Activated CD4-positive, alpha-beta memory T cell treated with anti-CD3 and anti-CD28 coated beads for 36 hours (primary cell): ENCODE measurements at regions of chr19 and their contacts with region 1.

Region 1: DNA sequence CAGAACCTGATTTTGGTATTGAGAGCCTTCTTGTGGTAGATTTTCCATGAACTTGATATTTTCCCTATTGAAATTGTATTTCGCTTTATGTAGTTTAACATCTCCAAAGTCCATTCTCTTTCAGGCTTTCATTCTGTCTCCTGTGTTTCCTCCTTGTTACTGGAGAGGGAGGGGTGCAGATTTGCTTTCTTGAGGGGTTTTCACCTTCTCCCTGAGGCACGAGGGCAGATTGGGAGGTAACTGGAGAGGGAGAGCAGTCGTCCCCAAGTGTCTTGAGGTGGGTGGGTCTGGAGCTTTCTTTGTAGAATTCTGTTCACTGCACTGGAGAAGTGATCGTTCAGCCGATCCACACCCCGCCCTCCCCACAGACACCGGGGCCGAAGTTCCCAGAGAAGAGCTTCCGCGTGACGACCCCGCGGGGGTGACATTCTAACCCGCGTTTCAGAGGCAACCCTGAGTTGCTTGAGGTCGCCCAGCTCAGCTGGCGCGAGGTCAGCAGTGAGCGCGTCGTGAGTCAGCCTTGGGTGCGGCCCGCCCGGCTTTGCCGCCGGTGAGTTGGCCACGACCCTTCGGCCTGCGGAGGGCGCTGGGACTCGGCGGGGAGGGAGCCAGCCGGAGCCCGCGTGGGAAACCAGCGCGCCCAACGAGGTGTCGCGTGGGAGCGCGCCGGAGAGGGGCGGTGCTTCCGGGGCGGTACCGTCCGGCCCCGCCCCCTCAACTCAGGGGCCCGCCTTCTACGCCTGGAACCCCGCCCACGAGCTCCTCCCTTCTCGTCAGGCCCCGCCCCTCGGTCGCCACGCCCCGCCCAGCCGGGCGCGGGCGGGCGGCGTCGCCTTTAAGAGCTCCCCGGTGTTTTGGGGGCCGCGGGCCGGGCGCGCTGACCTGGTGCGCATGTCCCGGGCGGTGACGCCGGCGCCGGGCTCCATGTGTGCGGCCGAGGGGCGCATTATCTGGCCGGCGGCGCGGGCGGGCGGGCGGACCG is at the start of gene GATAD2A:
- DNase-seq: peak; percentile 94
- H3K4me3 Mint-ChIP-seq: peak within 1 kb of the TSS; percentile 95
- H3K27ac Mint-ChIP-seq: peak within 1 kb of the TSS; percentile 93
- H3K4me1 Mint-ChIP-seq: peaks cover 62% of the 10 kb centered on the region
- H3K27me3 Mint-ChIP-seq: no peaks in the 10 kb centered on the region
- total RNA-seq, gene GATAD2A: 114 TPM

Region 2: DNA sequence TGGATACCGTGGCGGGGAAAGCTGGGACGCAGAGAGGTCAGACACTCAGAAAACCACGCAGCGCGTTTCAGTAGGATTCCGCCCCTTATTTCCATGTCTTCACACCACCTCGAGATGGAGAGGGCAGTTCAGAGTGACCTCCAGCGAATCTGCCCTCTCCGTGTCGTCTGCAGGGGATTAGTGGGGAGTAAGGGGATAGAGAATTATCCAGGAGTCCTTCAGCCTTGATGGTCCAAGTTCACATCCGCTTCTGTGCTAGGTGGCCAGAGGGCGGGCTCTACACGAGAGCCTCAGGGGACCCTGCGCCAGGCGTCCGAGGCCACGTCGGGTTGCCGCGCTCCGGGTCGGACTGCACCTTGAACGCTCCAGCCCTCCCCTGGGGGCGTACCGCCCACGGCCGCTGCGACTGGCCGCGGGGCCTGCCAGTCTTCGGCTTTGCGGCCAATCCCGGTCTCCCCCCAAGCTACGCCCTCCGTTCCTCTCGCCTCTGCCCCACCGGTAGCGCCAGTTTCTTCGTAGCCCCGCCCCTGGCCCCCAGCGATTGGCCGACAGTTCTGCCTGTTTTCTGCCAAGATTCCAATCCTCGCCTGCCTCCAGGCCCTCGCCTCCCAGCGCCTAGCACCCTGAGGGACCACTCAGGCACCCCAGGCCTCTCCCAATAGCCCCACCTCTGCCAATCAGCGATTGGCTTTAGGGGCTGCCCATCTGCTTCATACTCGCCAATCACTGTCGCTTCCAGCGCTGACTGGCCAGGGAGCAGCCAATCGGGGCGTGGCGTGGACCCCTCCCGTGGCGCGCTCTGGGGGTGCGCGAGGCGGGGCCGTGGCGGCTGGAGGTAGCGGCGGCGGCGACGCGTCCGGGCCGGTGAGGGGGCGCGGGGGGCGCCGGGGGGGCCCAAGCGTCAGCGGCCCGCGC is 341.7 kb before region 1 on chr19 and contains the start of gene SLC25A42:
- CTCF ChIA-PET with region 1: no interaction called
- POLR2A ChIA-PET with region 1: no interaction called
- intact Hi-C with region 1: loop called (anchors 2 kb)
- DNase-seq: peak; percentile 99
- H3K4me3 Mint-ChIP-seq: peak within 1 kb of the TSS; percentile 79
- H3K27ac Mint-ChIP-seq: peak within 1 kb of the TSS; percentile 72
- H3K4me1 Mint-ChIP-seq: peaks cover 31% of the 10 kb centered on the region
- H3K27me3 Mint-ChIP-seq: no peaks in the 10 kb centered on the region
- total RNA-seq, gene SLC25A42: 12.2 to 12.4 TPM

Region 3: GRCh38 chr19:19280561-19280960 is 124.6 kb before region 1 on chr19:
- CTCF ChIA-PET with region 1: no interaction called
- POLR2A ChIA-PET with region 1: no interaction called
- intact Hi-C with region 1: no loop called
- DNase-seq: no peak
- H3K4me3 Mint-ChIP-seq: no peak overlapping the region
- H3K27ac Mint-ChIP-seq: no peak overlapping the region
- H3K4me1 Mint-ChIP-seq: no peaks in the 10 kb centered on the region
- H3K27me3 Mint-ChIP-seq: no peaks in the 10 kb centered on the region

Region 4: DNA sequence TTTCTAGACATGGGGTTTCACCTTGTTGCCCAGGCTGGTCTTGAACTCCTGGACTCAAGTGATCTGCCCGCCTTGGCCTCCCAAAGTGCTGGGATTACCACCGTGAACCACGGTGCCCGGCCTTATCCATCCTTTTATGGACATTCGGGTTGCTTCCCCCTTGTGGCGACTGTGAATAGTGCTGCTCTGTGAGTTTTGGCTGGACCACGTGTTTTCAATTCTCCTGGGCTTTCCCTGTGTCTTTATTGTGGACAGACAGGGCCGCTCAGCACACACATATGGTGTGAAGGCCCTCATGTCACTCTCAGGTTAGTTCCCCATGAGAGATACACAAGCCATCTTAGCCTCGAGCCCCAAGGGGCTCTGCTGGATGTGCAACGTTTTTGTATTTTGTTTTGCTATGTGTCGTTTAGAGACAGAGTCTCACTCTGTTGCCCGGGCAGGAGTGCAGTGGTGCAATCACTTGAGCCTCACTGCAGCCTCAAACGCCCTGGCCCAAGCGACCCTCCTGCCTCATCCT is 44.0 kb before region 1 on chr19:
- CTCF ChIA-PET with region 1: interaction called, 9 read pairs
- POLR2A ChIA-PET with region 1: interaction called, 4 read pairs
- intact Hi-C with region 1: loop called (anchors 2 kb)
- DNase-seq: peak; percentile 88
- H3K4me3 Mint-ChIP-seq: no peak overlapping the region
- H3K27ac Mint-ChIP-seq: no peak overlapping the region
- H3K4me1 Mint-ChIP-seq: peaks cover 29% of the 10 kb centered on the region
- H3K27me3 Mint-ChIP-seq: no peaks in the 10 kb centered on the region

Region 5: DNA sequence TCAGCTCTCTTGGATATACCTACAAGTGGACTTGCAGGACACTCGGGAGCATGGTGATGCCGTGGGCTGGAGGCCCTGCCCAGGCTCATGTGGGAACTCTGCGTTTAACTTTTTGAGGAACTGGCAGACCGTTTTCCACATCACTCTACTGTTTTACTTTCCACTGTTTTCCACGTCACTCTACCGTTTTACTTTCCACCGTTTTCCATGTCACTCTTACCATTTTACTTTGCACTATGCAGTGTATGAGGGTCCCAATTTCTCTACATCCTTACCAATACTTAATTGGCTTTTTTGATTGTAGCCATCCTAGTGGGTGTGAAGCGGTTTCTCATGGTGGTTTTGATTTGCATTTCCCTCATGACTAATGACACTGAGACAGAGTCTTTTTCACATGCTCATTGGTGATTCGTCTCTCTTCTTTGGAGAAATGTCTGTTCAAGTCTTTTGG is 40.8 kb after region 1 on chr19:
- CTCF ChIA-PET with region 1: interaction called, 3 read pairs
- POLR2A ChIA-PET with region 1: interaction called, 4 read pairs
- intact Hi-C with region 1: loop called (anchors 2 kb)
- DNase-seq: peak; percentile 39
- H3K4me3 Mint-ChIP-seq: peak overlapping the region; percentile 51
- H3K27ac Mint-ChIP-seq: peak overlapping the region; percentile 82
- H3K4me1 Mint-ChIP-seq: peaks cover 71% of the 10 kb centered on the region
- H3K27me3 Mint-ChIP-seq: no peaks in the 10 kb centered on the region

Region 6: DNA sequence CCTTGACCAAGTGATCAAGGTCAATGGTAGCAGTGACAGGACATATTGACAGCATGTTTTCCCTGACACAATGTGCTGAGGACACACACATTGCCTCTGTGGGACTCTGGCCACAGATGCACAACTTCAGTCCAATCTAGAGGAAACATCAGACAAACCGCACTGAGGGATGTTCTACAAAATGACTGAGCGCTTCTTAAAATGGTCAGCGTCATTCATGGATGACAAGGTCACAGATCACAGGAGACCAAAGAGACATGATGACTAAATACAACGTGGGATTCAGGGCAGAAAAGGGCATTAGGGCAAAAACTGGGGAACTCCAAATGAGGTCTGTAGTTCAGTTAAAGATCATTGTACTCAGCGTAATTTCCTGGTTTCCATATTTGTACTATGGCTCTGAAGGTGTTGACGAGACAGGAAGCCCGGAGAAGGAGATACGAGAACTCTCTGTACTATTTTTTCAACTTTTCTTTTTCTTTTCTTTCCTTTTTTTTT is 192.7 kb after region 1 on chr19:
- CTCF ChIA-PET with region 1: no interaction called
- POLR2A ChIA-PET with region 1: no interaction called
- intact Hi-C with region 1: loop called (anchors 5 kb)
- DNase-seq: peak; percentile 74
- H3K4me3 Mint-ChIP-seq: peak overlapping the region; percentile 75
- H3K27ac Mint-ChIP-seq: peak overlapping the region; percentile 100
- H3K4me1 Mint-ChIP-seq: peaks cover 81% of the 10 kb centered on the region
- H3K27me3 Mint-ChIP-seq: no peaks in the 10 kb centered on the region